Posterior vena cava (tissue), 2 donors: ENCODE measurements at regions of chr4 and their contacts with region 1.

Region 1: DNA sequence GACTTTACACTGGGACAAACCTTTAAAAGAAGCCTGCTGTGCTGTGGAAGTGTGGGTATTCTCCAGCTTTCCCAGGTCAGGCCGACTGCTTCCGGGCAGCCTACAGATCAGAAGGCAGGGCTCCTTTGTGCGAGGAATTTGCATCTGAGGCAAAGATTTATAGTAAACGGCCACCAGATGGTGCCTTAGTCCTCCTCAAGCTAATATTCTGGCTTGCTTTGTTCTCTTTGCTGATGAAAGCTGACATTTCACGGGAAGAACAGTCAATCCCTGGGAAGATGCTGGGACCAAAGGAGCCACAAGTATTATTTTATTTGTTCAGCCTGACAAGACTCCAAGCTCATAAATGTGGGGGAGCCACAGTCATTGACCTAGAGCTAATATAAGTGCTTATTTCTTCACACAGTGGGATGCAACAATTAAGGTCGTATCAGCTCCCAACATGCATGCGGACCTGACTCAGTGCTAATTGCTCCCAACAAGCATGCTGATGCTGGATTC is 120.7 kb upstream of the TRIM2 start:
- DNase-seq: no peak

Region 2: DNA sequence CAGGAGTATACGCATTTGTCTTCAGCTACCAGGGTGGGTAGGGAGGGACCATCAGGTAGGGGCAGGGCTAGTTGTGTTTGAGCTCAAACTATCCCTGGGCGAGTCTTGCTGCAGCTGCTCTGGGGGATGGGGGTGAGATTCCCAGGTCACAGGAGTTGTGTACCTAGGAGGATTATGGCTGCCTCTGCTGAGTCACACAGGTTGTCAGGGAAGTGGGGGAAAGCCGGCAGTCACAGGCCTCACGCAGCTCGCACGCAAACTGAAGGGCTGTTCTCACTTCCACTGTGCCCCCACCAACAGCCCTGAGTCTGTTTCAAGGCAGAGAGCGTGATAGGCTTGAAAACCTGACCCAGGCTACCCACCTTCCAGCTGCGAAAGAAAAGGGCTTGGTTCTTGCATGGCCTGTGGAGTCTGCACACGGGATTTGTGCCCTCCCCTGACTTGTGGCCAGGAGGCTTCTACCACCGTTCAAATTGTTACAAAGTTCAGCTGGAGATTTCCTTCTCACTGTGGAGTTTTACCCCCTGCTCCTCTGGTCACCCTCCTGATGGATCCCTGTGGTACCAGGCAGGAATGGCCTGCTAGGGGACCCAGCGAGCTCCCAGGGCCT is 239.9 kb before region 1 on chr4:
- intact Hi-C with region 1: loop called in 1 of 2 experiments (anchors 10 kb)
- DNase-seq: no peak

Region 3: GRCh38 chr4:153127760-153128494 is 44.4 kb after region 1 on chr4:
- intact Hi-C with region 1: loop called (anchors 2 to 5 kb)
- DNase-seq: peak; percentile 90